ENCODE measurements at regions of chr1 and their contacts with region 1.

Region 1: DNA sequence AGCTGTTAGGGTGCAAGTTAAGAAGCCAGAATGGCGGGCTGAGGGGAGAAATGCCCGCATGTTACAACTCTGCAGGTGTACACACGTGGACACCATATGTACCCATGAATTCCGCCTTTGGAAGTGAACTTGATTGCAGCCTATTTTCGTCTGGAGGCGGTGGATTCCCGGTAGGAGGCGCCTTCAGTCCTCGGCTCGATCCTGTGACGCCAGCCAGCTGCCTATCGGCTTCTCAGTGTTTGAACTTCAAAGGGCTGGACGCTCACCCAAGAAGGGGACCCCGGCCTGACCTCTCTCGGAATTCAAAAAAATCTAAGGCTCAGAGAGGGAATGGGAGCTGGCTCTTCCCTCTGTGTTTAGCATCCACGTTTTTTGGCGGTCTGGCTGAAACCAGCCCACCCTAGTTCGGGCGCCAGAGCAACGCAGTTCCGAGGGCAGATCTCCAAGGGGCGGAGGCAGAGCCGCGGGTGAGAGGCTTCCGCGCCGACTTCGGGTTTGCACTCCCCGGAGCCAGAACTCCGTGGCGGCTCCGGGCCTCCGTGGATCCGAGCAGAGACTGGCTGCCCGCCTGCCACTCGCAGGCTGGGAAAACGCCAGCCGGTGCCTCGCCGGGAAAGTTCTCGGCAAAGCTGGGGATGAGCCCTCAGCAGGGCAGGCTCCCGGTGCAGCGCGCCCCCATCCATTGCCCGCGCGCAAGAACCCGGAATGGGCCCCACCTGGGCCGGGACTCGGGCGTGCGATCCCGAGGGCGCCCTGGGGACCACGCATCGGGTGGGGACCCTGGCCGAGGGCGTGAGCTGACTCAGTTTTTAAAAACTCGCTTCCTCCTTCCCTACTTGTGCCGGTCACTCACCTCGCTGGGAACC is 996 bp upstream of the TMEM51 start:
- DNase-seq: peak; percentile 92
- H3K4me3 Mint-ChIP-seq: peak overlapping the region; percentile 85
- H3K27ac Mint-ChIP-seq: peak overlapping the region; percentile 42
- H3K4me1 Mint-ChIP-seq: peaks cover 6% of the 10 kb centered on the region
- H3K27me3 Mint-ChIP-seq: no peaks in the 10 kb centered on the region
- CTCF ChIP-seq: peak; percentile 45

Region 2: DNA sequence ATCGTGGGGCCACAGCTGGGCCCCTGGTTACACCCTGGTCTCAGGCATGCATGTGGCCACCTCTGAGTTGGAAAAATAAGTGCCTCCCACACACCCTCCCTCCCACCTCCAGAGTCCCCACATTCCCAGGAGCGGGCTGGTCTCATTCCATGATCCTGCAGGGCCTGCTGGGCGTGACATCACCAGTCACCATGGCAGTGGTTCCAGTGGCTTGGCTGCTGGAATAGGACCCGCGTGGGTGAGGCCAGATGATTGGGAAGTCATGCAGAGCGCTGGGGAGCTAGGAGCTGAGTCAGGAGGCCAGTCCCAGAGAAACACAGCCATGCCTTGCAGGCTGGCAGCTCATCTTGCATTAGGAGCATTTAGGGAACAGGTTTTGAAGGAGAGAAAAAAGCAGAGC is 124.4 kb before region 1 on chr1:
- CTCF ChIA-PET with region 1: no interaction called
- POLR2A ChIA-PET with region 1: no interaction called
- intact Hi-C with region 1: no loop called
- DNase-seq: no peak
- H3K4me3 Mint-ChIP-seq: no peak overlapping the region
- H3K27ac Mint-ChIP-seq: no peak overlapping the region
- H3K4me1 Mint-ChIP-seq: peaks cover 9% of the 10 kb centered on the region
- H3K27me3 Mint-ChIP-seq: no peaks in the 10 kb centered on the region
- CTCF ChIP-seq: no peak

Region 3: DNA sequence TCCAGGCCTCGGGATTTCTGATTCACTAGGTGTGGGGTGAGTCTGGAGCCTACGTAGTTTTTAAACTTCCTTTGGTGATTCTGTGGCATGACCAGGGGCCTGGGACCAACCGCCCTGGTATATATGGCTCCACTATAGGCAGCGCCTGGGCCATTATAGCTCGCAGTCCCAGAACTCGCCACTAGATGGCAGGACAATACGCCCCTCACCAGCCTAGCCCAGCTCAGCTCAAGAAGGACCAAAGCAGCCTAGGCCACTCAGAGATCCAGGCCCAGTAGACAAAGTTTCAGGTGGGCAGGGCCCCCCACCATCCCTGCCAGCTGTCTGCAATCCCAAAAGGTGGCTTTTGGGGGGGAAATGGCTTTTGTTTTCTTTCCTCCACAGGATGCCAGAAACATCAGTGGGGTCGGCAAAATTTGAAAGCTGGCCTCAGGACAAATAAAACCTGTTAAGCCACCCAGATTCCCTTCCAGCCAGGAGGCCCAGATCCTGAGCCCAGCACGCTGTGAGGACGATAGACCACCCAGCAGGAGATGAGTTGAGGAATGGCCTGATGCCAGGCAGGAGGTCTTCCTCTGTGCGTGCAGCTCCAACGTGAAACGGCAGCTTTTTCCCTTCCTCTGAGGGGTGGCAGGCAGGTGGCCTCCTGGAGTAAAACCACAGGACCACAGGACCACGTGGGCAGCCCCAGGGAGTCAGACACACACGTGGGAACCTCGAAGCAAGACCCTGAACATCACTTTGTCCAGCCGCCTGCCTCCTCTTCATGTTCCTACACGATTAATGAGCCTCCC is 23.8 kb before region 1 on chr1:
- CTCF ChIA-PET with region 1: interaction called, 35 read pairs
- POLR2A ChIA-PET with region 1: interaction called, 7 read pairs
- intact Hi-C with region 1: no loop called
- DNase-seq: peak; percentile 74
- H3K4me3 Mint-ChIP-seq: no peak overlapping the region
- H3K27ac Mint-ChIP-seq: no peak overlapping the region
- H3K4me1 Mint-ChIP-seq: no peaks in the 10 kb centered on the region
- H3K27me3 Mint-ChIP-seq: peaks cover 1% of the 10 kb centered on the region
- CTCF ChIP-seq: peak; percentile 86

Region 4: DNA sequence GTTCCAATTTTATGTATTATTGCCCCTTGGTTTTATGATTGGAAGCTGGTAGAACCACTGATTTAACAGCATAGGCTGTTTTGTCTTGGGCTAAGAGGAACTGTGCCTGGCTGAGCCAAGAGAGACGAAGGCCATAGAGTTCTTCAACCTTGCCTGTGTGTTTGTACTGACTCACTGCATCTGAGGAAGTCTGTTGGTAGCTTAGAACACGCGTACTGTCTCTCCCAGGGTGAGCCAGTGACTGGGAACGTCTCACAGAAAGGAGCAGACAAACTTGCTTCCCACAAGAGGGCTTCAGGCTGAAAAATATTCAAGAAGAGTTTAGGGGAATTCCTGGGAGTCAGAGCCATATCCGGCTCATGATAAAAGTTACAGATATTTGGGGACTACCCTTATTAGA is 15.9 kb after region 1 on chr1:
- CTCF ChIA-PET with region 1: interaction called, 6 read pairs
- POLR2A ChIA-PET with region 1: interaction called, 13 read pairs
- intact Hi-C with region 1: no loop called
- DNase-seq: peak; percentile 60
- H3K4me3 Mint-ChIP-seq: no peak overlapping the region
- H3K27ac Mint-ChIP-seq: peak overlapping the region; percentile 93
- H3K4me1 Mint-ChIP-seq: peaks cover 23% of the 10 kb centered on the region
- H3K27me3 Mint-ChIP-seq: no peaks in the 10 kb centered on the region
- CTCF ChIP-seq: no peak

Region 5: GRCh38 chr1:15196807-15197530 is 44.4 kb after region 1 on chr1:
- CTCF ChIA-PET with region 1: interaction called, 5 read pairs
- POLR2A ChIA-PET with region 1: interaction called, 5 read pairs
- intact Hi-C with region 1: loop called (anchors 1 kb)
- DNase-seq: no peak
- H3K4me3 Mint-ChIP-seq: no peak overlapping the region
- H3K27ac Mint-ChIP-seq: no peak overlapping the region
- H3K4me1 Mint-ChIP-seq: peaks cover 8% of the 10 kb centered on the region
- H3K27me3 Mint-ChIP-seq: no peaks in the 10 kb centered on the region
- CTCF ChIP-seq: no peak

Region 6: DNA sequence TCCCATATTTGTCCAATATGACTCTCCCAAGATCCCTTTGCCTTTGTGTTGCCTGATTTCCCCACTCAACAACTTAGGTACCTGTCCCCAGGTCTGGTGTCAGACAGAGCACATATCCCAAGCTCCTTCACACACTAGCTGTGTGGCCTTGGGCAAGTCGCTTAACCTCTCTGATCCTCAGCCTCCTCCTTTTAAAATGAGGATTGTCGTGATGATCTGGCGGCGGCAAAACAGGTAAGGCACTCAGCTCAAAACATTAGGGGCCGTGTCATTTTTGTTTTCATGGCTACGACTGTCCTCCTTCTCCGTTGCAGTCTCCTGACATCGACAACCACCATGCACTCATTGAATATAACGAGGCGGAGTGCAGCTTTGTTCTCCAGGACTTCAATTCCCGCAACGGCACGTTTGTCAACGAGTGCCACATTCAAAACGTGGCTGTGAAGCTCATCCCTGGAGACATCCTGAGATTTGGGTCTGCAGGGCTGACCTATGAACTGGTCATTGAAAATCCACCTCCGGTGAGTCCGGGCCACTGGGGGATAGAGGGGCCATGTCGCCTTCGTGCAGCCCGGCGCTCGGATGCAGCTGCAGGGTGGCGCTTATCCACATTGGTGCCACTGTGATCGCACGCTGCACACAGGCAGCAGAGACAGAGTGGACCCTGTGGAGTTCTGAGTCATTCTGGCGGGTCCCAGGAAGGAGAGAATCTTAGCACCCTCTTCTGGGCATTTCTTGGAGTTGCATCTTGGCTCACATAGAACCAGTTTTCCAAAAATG is 119.6 kb after region 1 on chr1:
- CTCF ChIA-PET with region 1: interaction called, 67 read pairs
- POLR2A ChIA-PET with region 1: interaction called, 20 read pairs
- intact Hi-C with region 1: loop called (anchors 1 kb)
- DNase-seq: peak; percentile 89
- H3K4me3 Mint-ChIP-seq: no peak overlapping the region
- H3K27ac Mint-ChIP-seq: no peak overlapping the region
- H3K4me1 Mint-ChIP-seq: peaks cover 7% of the 10 kb centered on the region
- H3K27me3 Mint-ChIP-seq: peaks cover 12% of the 10 kb centered on the region
- CTCF ChIP-seq: peak; percentile 75

Region 7: GRCh38 chr1:15304701-15305467 is 152.3 kb after region 1 on chr1:
- CTCF ChIA-PET with region 1: interaction called, 29 read pairs
- POLR2A ChIA-PET with region 1: interaction called, 3 read pairs
- intact Hi-C with region 1: loop called (anchors 1 kb)
- DNase-seq: peak; percentile 69
- H3K4me3 Mint-ChIP-seq: no peak overlapping the region
- H3K27ac Mint-ChIP-seq: no peak overlapping the region
- H3K4me1 Mint-ChIP-seq: no peaks in the 10 kb centered on the region
- H3K27me3 Mint-ChIP-seq: no peaks in the 10 kb centered on the region
- CTCF ChIP-seq: peak; percentile 84

Region 8: GRCh38 chr1:15475752-15476314 is 323.3 kb after region 1 on chr1 and contains the start of gene CELA2B:
- CTCF ChIA-PET with region 1: no interaction called
- POLR2A ChIA-PET with region 1: no interaction called
- intact Hi-C with region 1: no loop called
- DNase-seq: no peak
- H3K4me3 Mint-ChIP-seq: no peak within 1 kb of the TSS
- H3K27ac Mint-ChIP-seq: no peak within 1 kb of the TSS
- H3K4me1 Mint-ChIP-seq: no peaks in the 10 kb centered on the region
- H3K27me3 Mint-ChIP-seq: no peaks in the 10 kb centered on the region
- CTCF ChIP-seq: no peak
- total RNA-seq, gene CELA2B: not detected in 2 replicates

Measured in MCF 10A (cell line).